ENCODE measurements at regions of chr3 and their contacts with region 1.

Region 1: GRCh38 chr3:179299999-179300613 is 22.7 kb upstream of the ZNF639 start:
- DNase-seq: no peak
- ATAC-seq: no peak

Region 2: DNA sequence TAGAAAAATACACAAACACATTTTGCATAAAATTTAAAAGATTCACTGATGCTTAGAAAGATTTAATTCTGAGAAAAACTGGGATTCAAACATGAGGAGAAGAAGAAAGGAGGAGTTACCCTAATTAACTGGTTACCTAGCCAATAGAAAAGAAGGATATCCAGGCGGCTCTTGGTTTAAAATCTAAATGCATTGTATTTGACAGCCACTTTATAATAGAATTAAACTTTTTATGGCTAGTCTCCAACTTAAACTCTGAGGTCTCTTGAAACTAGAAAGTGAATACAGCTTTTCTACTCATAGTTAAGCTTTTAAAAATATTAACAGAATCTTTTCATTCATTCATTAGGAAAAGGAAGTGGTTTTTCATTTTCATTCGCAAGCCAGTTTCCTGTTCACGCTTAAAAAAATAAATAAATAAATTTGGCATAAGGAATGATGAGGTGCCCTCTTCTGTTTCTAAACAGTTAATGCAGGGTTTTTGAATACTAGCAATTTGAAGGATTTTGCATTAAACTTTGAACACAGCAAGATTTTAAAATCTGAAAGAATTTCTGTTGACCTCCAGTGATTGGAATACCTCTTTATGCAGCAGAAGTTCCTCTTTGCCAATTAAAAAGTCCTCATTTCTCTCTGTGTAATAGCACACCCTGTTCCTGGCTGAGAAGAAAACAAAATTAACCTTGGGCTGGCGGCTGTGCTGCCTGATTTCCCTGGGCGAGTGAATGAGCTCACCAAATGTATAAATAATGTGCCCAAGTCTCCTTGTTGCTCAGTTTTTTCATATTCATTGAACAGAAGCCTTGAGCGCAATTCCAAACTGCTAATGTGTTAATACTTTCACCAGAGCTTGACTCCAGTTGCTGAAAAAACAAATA is 333.6 kb before region 1 on chr3:
- intact Hi-C with region 1: no loop called
- DNase-seq: no peak
- ATAC-seq: peak; percentile 70

Region 3: DNA sequence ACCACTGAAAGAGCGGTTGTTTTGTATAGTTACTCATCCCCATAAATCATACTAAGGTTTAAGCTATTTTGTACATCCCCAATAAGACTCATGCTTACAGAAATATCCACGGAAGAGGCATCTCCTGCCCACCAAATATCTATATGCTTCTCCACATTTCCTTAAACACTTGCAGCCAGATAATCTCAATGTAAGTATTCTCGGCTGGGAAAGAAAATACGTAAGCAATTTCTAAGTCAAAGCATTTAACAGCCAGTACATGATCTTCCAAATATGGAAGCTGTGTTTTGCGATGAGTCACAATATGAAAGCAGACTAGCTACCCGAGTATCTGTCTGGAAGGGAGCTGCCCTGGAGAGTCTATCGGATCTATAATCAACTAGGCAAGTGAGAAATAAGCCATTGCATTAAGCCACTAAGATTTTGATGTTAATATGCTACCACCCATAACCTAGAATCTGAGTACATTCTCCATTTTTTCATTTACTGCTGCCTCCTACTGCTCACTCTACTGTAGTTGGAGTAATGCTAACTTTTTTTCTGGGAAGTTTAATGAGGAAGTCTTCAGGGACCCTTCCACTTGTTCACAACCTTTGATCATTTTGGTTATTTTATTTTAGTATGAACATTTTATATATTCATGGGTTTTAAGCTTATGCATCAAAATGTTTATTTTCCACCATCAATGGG is 201.6 kb before region 1 on chr3:
- intact Hi-C with region 1: loop called (anchors 10 kb)
- DNase-seq: no peak
- ATAC-seq: no peak

Region 4: DNA sequence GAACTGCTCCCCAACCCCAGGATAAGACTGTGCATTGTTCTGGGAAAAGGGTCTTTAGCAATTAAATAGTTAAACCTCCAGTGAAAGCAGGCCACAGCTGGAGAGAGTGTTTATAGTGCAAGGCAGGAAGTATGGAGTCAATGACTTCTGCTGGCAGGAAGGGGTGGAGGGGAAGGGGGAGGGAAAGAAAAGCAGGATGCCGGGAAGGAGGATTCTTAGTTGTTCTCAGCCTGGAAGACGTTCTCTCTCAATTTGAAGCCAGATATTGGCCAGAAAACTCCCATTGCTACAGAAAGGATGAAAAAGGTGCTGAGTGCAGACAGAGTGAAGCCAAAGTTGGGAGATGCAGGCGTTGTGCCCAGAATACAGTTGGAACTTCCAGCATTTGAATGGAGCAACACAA is 226.9 kb after region 1 on chr3:
- intact Hi-C with region 1: no loop called
- DNase-seq: peak; percentile 61
- ATAC-seq: peak; percentile 94

Region 5: DNA sequence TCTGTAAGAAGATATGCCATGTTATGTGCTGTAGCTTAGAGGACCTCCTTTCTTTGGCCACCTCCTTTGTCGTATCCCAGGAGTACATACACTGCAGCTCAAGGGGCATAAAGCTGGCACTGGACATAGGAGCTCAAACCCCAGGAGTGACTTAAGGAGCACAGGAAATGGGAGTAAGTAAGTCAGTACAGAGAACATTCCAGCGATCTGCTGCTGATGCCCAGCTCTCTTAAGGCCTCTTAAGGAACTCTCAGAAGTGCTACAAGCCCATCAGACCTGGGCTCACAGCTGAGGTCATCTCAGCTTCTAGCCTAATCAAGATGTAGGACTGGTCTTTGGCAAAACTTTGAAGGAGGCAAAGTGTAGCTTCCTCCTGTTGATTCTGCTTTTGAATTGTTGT is 241.0 kb after region 1 on chr3:
- intact Hi-C with region 1: no loop called
- DNase-seq: no peak
- ATAC-seq: no peak

Region 6: GRCh38 chr3:181030948-181031347 is 1730.8 kb after region 1 on chr3:
- intact Hi-C with region 1: no loop called
- DNase-seq: no peak
- ATAC-seq: no peak